ENCODE measurements at regions of chr7 and their contacts with region 1.

Region 1: DNA sequence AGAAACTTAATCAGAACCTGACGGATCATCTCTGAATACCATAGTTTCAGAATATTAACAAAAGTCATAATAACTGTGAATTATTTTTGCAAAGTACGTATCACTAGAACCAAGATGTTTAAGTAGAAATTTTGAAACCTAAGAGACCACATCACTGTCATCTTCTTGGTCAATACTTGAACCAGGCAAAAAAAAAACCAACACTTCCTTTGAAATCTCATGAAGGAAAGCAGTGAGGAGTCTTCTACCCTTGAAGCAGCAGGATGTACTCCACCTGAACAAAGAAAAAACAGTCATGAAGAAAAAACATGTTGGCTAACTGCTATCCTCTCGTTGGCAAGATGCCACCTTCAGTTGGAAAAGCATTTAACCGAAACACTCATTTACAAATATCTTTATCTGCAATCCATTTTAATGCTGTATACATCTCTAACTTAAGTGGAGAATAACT is 82.4 kb downstream of the SRPK2 start:
- DNase-seq: no peak
- H3K4me3 ChIP-seq: no peak overlapping the region
- CTCF ChIP-seq: no peak
- POLR2A ChIP-seq: no peak

Region 2: DNA sequence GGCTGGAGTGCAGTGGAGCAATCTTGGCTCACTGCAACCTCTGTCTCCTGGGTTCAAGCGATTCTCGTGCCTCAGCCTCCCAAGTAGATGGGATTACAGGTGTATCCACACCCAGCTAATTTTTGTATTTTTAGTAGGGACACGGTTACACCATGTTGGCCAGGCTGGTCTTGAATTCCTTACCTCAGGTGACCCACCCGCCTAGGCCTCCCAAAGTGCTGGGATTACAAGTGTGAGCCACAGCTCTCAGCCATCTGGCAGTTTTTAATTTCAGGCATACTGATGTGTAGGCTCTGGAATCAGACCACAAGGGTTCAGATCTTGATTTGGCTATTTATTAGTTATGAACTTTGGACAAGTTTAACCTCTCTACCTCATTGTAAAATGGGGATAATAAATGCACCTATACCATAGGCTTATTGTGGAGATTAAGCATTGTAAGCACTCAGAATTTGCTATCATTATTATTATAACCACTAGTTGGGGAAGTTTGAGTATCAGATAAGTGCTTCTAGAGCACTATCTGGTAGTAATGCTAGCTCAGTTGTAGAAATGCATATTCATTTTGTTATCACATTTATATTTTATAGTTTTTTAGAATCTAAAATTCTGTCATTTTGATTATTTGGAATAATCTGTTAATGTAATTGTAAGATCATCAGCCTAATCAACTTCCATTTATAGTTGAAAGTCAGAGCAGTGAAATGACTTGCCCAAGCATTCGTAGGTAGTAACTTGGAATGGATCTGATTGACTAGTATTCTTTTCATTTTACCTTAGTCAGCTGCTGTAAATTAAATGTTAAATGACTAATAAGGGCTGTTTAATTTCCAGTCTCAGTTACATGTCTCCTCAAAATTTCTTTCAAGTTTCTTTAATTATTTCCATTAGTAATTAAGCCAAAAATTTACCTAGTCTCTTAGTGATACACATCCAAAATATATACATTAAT is 269.8 kb before region 1 on chr7:
- intact Hi-C with region 1: no loop called
- DNase-seq: no peak
- H3K4me3 ChIP-seq: no peak overlapping the region
- CTCF ChIP-seq: no peak
- POLR2A ChIP-seq: no peak

Region 3: GRCh38 chr7:105055621-105056020 is 250.7 kb before region 1 on chr7:
- intact Hi-C with region 1: loop called (anchors 2 kb)
- DNase-seq: no peak
- H3K4me3 ChIP-seq: no peak overlapping the region
- CTCF ChIP-seq: no peak
- POLR2A ChIP-seq: no peak

Region 4: GRCh38 chr7:105245398-105246114 is 60.8 kb before region 1 on chr7:
- intact Hi-C with region 1: no loop called
- DNase-seq: no peak
- H3K4me3 ChIP-seq: no peak overlapping the region
- CTCF ChIP-seq: no peak
- POLR2A ChIP-seq: no peak

Region 5: GRCh38 chr7:105413887-105414437 is 107.6 kb after region 1 on chr7:
- intact Hi-C with region 1: no loop called
- DNase-seq: no peak
- H3K4me3 ChIP-seq: no peak overlapping the region
- CTCF ChIP-seq: no peak
- POLR2A ChIP-seq: no peak

Region 6: GRCh38 chr7:106947244-106947728 is 1641.0 kb after region 1 on chr7:
- intact Hi-C with region 1: no loop called
- DNase-seq: peak in 1 of 2 donors; percentile 26
- H3K4me3 ChIP-seq: no peak overlapping the region
- CTCF ChIP-seq: no peak
- POLR2A ChIP-seq: no peak